HAP-1 (cell line): ENCODE measurements at regions of chr15 and their contacts with region 1.

Region 1: DNA sequence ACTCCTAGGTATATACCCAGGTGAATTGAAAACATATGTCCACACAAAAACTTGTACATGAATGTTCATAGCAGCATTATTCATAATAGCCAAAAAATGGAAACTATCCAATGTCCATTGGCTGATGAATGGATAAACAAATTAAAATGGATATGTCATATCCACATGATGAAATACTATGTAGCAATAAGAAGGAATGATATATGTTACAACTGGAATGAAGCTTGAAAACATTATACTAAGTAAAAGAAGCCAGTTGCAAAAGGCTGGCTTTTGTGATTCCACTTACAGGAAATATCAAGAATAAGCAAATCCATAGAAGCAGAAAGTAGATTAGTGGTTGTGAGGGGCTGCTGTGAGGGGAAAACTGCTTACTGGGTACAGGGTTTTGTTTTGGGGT is 33.7 kb downstream of the BNC1 start:
- DNase-seq: no peak
- H3K4me3 ChIP-seq: no peak overlapping the region
- H3K4me1 ChIP-seq: peaks cover 4% of the 10 kb centered on the region; the same call in 1 of the 2 replicates
- H3K27me3 ChIP-seq: peaks cover 32% of the 10 kb centered on the region

Region 2: DNA sequence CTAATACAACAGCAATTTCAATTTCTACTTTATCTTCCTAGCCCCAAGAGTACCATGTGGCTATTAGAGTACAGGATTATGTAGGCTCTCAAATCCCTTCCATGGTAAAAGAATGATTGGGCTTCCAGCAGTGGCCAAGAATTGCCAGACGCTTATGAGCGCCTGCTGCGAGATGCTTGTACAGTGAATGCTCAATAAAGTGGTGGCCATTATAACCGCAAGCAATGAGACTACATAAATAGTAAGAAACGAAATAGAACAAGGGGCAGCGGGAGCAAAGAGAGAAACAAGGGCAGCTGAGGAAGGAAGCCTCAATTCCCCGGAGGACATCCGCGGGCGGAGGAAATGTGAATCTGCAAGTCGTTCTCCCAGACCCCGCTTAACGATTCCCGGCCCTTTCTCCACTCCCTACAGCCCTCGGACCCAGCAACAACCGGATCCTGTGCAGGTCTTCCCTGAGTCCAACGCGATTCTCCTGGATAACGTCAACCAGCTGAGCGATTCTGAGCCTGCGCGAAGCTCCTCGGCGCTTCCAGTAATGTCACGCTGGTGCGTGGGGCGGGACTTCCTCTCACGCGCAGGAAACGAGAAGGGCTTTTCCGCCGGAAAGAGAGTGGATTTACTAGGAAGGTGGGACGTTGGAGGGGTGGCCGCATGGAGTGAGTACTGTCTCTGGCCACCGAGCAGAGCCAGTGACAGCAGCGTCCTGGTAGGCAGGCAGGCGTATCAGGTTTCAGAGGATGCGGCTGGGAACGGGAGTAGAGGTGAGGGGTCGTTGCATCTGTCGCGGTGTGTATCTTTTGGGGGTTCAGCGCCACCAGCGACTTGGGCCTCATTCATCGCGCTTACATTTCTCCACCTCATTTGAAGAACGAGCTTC is 500.6 kb before region 1 on chr15:
- in situ Hi-C with region 1: no loop called
- DNase-seq: peak; percentile 99 to 100
- H3K4me3 ChIP-seq: peak overlapping the region; percentile 70
- H3K4me1 ChIP-seq: peaks cover 14% of the 10 kb centered on the region
- H3K27me3 ChIP-seq: no peaks in the 10 kb centered on the region

Region 3: DNA sequence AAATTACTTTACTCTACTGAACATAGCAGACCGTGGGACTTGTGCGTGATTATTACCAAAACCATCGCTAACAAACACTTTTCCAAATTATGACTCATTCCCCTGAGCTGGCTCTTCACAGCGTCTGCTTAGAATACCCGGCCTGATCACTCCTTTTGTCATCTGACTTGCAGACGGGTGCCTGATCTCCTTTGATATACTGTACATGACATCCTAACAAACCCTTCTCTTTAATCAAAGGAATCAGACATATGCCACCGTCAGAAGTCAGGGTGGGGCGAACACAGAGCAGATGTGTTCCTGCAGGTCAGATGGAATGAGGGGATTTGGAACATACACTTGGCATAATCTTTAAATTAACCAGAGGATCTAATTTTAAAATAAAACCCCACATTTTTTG is 147.8 kb after region 1 on chr15:
- in situ Hi-C with region 1: no loop called
- DNase-seq: no peak
- H3K4me3 ChIP-seq: no peak overlapping the region
- H3K4me1 ChIP-seq: no peaks in the 10 kb centered on the region
- H3K27me3 ChIP-seq: peaks cover 12% of the 10 kb centered on the region

Region 4: DNA sequence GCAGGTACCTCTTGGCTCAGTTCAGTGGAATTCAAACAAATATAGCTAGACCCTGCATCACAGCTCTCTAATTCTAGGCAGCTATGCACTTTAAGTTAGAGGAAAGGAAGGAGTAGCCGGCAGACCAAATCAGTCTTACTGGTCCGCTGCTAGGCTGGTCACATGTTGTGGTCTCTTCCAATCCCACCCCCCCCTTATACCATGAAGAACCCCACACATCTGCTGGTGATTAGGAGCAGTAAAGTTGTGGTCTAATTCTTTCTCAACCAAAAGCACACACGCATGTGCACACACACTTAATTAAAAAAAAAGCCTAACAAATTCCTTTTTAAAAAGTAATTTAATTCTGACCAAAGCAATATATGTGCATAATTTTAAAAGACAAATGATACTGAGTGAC is 179.6 kb after region 1 on chr15:
- in situ Hi-C with region 1: loop called (anchors 5 kb)
- DNase-seq: no peak
- H3K4me3 ChIP-seq: no peak overlapping the region
- H3K4me1 ChIP-seq: no peaks in the 10 kb centered on the region
- H3K27me3 ChIP-seq: peaks cover 38% of the 10 kb centered on the region

Region 5: DNA sequence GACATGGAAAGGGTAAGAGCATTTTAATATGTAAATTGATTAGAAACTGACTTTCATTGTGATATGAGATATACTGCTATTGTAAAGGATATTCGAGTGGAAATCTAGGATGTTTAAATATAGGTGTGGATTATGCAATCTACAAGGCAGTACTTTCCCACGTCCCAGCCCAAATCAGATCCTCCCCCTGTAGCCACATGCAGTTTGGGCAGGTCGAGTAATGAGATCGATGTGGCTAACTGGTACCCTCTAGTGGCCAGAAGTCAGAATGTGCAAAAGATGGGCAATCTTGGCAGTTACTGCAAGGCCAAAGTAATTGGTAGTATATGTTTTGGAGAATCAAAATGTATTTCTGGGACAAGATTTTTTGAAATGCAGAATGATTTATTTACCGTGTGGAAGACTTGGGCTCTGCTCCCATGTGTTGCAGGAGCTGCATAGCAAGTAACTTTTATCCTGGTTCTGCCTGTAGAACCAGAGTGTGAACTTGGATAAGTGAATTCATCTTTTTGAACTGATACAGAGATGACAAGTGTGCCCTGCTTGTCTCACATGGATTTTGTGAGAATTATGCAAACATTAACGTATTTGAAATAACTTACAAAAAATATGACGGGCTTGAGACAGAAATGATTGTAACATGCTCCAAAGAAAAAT is 308.6 kb after region 1 on chr15:
- in situ Hi-C with region 1: loop called (anchors 5 kb)
- DNase-seq: peak; percentile 86 to 88
- H3K4me3 ChIP-seq: no peak overlapping the region
- H3K4me1 ChIP-seq: 0 out of 2 replicates have a peak, but pooled peaks cover 4% of the 10 kb centered on the region
- H3K27me3 ChIP-seq: no peaks in the 10 kb centered on the region

Region 6: DNA sequence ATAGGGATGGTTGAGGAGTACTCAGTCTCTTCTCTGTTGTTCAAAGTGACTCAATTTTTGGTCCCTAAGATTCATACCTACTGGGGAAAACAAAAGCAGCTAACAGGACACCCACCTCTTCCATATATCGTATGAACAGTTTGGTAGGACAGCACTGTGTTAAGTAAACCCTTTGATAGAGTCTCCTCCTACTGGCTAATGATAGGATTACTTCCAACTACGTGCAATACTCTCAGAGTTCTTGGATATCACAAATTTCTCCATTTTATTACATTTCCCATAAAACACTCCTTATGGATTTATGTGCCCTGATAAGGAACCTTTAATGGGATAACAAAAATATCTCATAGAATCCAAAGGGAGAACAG is 784.6 kb after region 1 on chr15:
- in situ Hi-C with region 1: loop called (anchors 25 kb)
- DNase-seq: peak in 1 of 2 experiments; percentile 35
- H3K4me3 ChIP-seq: no peak overlapping the region
- H3K4me1 ChIP-seq: no peaks in the 10 kb centered on the region
- H3K27me3 ChIP-seq: peaks cover 3% of the 10 kb centered on the region; the same call in 1 of the 2 replicates